Right cardiac atrium (tissue), 5 donors: ENCODE measurements at regions of chr9 and their contacts with region 1.

Region 1: DNA sequence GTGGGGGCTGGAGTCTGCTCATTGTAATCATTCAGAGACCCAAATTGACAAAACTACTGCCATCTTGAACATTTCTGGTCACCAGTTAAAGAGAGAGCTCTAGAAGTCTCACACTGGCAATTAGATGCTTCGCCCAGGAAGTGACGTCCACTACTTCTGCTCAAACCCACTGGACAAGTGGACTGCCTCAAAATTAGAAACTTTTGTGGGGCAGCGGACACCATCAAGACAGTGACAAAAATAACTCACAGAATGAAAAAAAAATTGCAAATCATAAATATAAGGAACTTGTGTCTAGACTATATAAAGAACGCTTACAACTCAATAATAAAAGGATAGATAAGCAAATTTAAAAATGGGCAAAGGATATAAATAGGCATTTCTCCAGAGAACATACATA is 9.8 kb upstream of the SLC46A2 start:
- DNase-seq: no peak
- ATAC-seq: no peak
- H3K4me3 ChIP-seq: no peak overlapping the region
- H3K27ac ChIP-seq: no peak overlapping the region
- H3K4me1 ChIP-seq: no peaks in the 10 kb centered on the region
- H3K27me3 ChIP-seq: no peaks in the 10 kb centered on the region

Region 2: GRCh38 chr9:112844771-112845542 is 55.5 kb before region 1 on chr9:
- intact Hi-C with region 1: loop called in 2 of 4 experiments (anchors 5 kb)
- DNase-seq: peak; percentile 75 to 91 (median 90)
- ATAC-seq: peak; percentile 61 to 76
- H3K4me3 ChIP-seq: no peak overlapping the region
- H3K27ac ChIP-seq: no peak overlapping the region
- H3K4me1 ChIP-seq: no peaks in the 10 kb centered on the region
- H3K27me3 ChIP-seq: no peaks in the 10 kb centered on the region